Tibial artery (tissue), 4 donors: ENCODE measurements at regions of chr4 and their contacts with region 1.

Region 1: GRCh38 chr4:39134683-39135319 is 47.5 kb upstream of the WDR19 start:
- DNase-seq: no peak
- H3K4me3 ChIP-seq: no peak overlapping the region
- H3K27ac ChIP-seq: no peak overlapping the region
- H3K4me1 ChIP-seq: peaks cover 0 to 8% (median 4%) of the 10 kb centered on the region in 4 donors
- H3K27me3 ChIP-seq: no peaks in the 10 kb centered on the region
- CTCF ChIP-seq: no peak

Region 2: GRCh38 chr4:38768968-38769394 is 365.8 kb before region 1 on chr4:
- intact Hi-C with region 1: loop called (anchors 10 kb)
- DNase-seq: no peak
- H3K4me3 ChIP-seq: no peak overlapping the region
- H3K27ac ChIP-seq: no peak overlapping the region
- H3K4me1 ChIP-seq: no peaks in the 10 kb centered on the region
- H3K27me3 ChIP-seq: no peaks in the 10 kb centered on the region
- CTCF ChIP-seq: no peak

Region 3: GRCh38 chr4:38939165-38939564 is 195.6 kb before region 1 on chr4:
- intact Hi-C with region 1: no loop called
- DNase-seq: no peak
- H3K4me3 ChIP-seq: no peak overlapping the region
- H3K27ac ChIP-seq: no peak overlapping the region
- H3K4me1 ChIP-seq: no peaks in the 10 kb centered on the region
- H3K27me3 ChIP-seq: no peaks in the 10 kb centered on the region
- CTCF ChIP-seq: no peak

Region 4: GRCh38 chr4:38980903-38981676 is 153.7 kb before region 1 on chr4:
- intact Hi-C with region 1: no loop called
- DNase-seq: no peak
- H3K4me3 ChIP-seq: no peak overlapping the region
- H3K27ac ChIP-seq: no peak overlapping the region
- H3K4me1 ChIP-seq: no peaks in the 10 kb centered on the region
- H3K27me3 ChIP-seq: no peaks in the 10 kb centered on the region
- CTCF ChIP-seq: no peak

Region 5: GRCh38 chr4:39045827-39046221 is 89.0 kb before region 1 on chr4:
- intact Hi-C with region 1: no loop called
- DNase-seq: no peak
- H3K4me3 ChIP-seq: peak overlapping the region; percentile 68 to 77
- H3K27ac ChIP-seq: peak overlapping the region; percentile 62 to 84
- H3K4me1 ChIP-seq: peaks cover 0 to 10% (median 0%) of the 10 kb centered on the region in 4 donors
- H3K27me3 ChIP-seq: no peaks in the 10 kb centered on the region
- CTCF ChIP-seq: no peak

Region 6: GRCh38 chr4:39154009-39154408 is 19.2 kb after region 1 on chr4:
- intact Hi-C with region 1: no loop called
- DNase-seq: no peak
- H3K4me3 ChIP-seq: no peak overlapping the region
- H3K27ac ChIP-seq: no peak overlapping the region
- H3K4me1 ChIP-seq: no peaks in the 10 kb centered on the region
- H3K27me3 ChIP-seq: no peaks in the 10 kb centered on the region
- CTCF ChIP-seq: no peak